Natural killer cell (primary cell): ENCODE measurements at regions of chr21 and their contacts with region 1.

Region 1: DNA sequence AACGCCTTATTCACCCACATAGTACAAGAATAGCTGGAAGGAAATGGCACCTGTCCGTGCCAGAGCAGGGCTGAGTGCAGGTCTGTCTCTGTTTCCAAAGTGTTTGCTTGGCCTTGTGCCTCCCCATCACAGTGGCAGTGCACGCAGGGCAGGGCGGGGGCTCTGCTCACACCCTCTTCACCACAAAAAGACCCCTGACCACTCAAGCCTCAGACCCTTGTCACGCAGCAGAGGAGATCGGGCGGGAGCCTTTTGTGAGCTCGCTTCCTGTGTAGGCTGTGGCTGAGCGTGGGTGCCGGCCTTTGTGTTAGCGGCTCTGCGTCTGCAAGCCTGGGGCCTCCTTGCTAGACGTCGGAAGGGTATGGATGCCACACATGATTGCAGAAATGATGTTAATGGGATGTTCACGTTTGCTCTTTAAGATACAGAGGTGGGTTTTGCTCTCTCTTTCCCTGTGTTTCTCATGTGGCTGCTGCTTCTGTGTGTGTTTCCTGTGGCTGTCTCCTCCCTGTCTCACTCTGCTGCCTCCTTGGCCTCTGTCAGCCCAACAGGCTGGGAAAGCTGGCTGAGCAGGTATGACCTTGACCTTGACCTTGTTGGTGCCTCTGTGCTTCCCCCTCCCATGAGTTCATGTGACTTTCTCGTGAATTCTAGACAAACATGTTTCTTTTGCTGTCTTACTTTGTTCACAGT is 45.4 kb downstream of the S100B start:
- DNase-seq: peak; percentile 59 to 84
- ATAC-seq: peak; percentile 85 to 91 (median 86)
- H3K4me3 ChIP-seq: peak overlapping the region; percentile 21
- H3K4me3 Mint-ChIP-seq: peak overlapping the region; percentile 80
- H3K27ac ChIP-seq: peak overlapping the region; percentile 78
- H3K27ac Mint-ChIP-seq: peak overlapping the region; percentile 91 to 96
- H3K4me1 ChIP-seq: peaks cover 41% of the 10 kb centered on the region
- H3K4me1 Mint-ChIP-seq: peaks cover 22 to 53% of the 10 kb centered on the region in 2 donors
- H3K27me3 ChIP-seq: no peaks in the 10 kb centered on the region
- H3K27me3 Mint-ChIP-seq: no peaks in the 10 kb centered on the region
- CTCF ChIP-seq: no peak

Region 2: GRCh38 chr21:44615911-44616590 is 1943.4 kb before region 1 on chr21:
- intact Hi-C with region 1: no loop called
- DNase-seq: no peak
- ATAC-seq: no peak
- H3K4me3 ChIP-seq: no peak overlapping the region
- H3K4me3 Mint-ChIP-seq: no peak overlapping the region
- H3K27ac ChIP-seq: no peak overlapping the region
- H3K27ac Mint-ChIP-seq: peak overlapping the region in 1 of 2 donors; percentile 95
- H3K4me1 ChIP-seq: peaks cover 31% of the 10 kb centered on the region
- H3K4me1 Mint-ChIP-seq: peaks cover 29 to 47% of the 10 kb centered on the region in 2 donors
- H3K27me3 ChIP-seq: no peaks in the 10 kb centered on the region
- H3K27me3 Mint-ChIP-seq: peaks cover 0 to 2% of the 10 kb centered on the region in 2 donors
- CTCF ChIP-seq: no peak

Region 3: DNA sequence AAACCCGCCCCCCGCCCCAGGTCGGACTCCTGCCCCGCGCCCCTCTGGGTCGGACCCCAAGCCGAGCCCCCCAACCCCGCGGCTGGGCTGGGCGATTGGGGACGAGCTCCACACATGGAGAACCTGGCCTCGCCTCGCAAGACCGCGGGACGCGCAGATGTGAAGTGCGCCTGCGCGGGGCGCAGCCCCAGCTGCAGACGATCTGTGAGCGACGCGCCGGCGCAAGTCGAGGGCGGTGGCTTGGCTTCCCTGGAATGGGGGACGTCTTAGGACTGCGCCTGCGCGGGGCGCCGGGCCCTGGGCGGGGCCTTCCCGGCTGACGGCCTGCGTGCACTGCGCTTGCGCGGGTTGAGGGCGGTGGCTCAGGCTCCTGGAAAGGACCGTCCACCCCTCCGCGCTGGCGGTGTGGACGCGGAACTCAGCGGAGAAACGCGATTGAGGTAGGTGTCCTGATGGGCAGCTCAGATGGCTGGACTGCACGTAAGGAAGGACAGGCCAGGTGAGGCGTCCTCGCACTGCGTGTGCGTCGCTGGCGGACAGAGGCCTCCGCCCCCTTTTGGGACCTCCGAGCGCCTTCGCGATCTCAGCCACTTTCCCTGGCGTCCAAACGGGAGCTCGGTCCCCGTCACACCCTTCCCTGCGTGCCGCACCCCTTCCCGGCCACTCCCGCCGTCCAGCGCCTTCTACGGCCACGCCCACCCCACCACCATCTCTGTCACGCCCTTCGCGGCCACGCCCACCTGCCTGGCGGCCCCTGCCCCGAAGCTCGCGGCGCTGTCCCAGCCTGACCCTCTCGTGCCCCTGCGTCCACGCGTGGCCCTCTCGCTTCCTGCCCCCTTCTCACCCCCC is 76.1 kb after region 1 on chr21 and contains the start of gene PRMT2:
- intact Hi-C with region 1: loop called (anchors 2 kb)
- DNase-seq: peak; percentile 97 to 99
- ATAC-seq: peak; percentile 81 to 95 (median 91)
- H3K4me3 ChIP-seq: peak within 1 kb of the TSS; percentile 86
- H3K4me3 Mint-ChIP-seq: peak within 1 kb of the TSS; percentile 98
- H3K27ac ChIP-seq: peak within 1 kb of the TSS; percentile 90
- H3K27ac Mint-ChIP-seq: peak within 1 kb of the TSS; percentile 93 to 99
- H3K4me1 ChIP-seq: peaks cover 31% of the 10 kb centered on the region
- H3K4me1 Mint-ChIP-seq: peaks cover 53 to 65% of the 10 kb centered on the region in 2 donors
- H3K27me3 ChIP-seq: no peaks in the 10 kb centered on the region
- H3K27me3 Mint-ChIP-seq: no peaks in the 10 kb centered on the region
- CTCF ChIP-seq: no peak
- total RNA-seq, gene PRMT2: 122 to 199 (median 170) TPM